Mammary epithelial cell (primary cell): ENCODE measurements at regions of chr19 and their contacts with region 1.

Region 1: GRCh38 chr19:7535035-7535992 is at the start of gene PNPLA6:
- DNase-seq: peak; percentile 88
- H3K4me3 ChIP-seq: peak within 1 kb of the TSS; percentile 86 to 99 (median 99)
- H3K27ac ChIP-seq: peak within 1 kb of the TSS; percentile 27
- H3K4me1 ChIP-seq: peaks cover 8% of the 10 kb centered on the region
- H3K27me3 ChIP-seq: no peaks in the 10 kb centered on the region
- CTCF ChIP-seq: no peak
- total RNA-seq, gene PNPLA6: 100 to 118 TPM

Region 2: GRCh38 chr19:7349961-7350711 is 185.2 kb before region 1 on chr19:
- CTCF ChIA-PET with region 1: no interaction called
- dilution Hi-C with region 1: no loop called
- in situ Hi-C with region 1: no loop called
- intact Hi-C with region 1: loop called (anchors 1 kb)
- DNase-seq: no peak
- H3K4me3 ChIP-seq: no peak overlapping the region
- H3K27ac ChIP-seq: no peak overlapping the region
- H3K4me1 ChIP-seq: no peaks in the 10 kb centered on the region
- H3K27me3 ChIP-seq: no peaks in the 10 kb centered on the region
- CTCF ChIP-seq: no peak

Region 3: DNA sequence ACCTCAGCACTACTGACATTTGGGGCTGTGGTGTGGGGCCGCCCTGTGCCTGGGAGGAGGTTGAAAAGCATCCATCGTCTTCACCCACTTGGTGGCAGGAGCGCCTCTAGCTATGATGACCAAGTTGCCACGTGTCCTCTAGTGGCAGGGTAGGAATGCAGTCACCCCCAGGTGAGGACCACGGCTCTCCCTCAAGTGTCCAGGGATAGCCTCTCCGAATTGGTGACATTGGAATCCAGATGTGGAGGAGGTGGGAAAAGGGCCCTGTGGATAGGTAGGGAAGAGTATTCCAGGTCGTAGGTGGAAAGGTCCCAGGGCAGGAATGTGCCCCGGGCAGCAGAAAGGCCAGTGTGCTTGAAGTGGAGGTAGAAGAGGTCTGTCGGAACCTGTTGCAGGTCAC is 149.0 kb before region 1 on chr19:
- CTCF ChIA-PET with region 1: no interaction called
- dilution Hi-C with region 1: no loop called
- in situ Hi-C with region 1: loop called in 1 of 2 experiments (anchors 25 kb)
- intact Hi-C with region 1: loop called (anchors 1 kb)
- DNase-seq: no peak
- H3K4me3 ChIP-seq: no peak overlapping the region
- H3K27ac ChIP-seq: no peak overlapping the region
- H3K4me1 ChIP-seq: peaks cover 7% of the 10 kb centered on the region
- H3K27me3 ChIP-seq: no peaks in the 10 kb centered on the region
- CTCF ChIP-seq: peak in 1 of 2 donors; percentile 26

Region 4: DNA sequence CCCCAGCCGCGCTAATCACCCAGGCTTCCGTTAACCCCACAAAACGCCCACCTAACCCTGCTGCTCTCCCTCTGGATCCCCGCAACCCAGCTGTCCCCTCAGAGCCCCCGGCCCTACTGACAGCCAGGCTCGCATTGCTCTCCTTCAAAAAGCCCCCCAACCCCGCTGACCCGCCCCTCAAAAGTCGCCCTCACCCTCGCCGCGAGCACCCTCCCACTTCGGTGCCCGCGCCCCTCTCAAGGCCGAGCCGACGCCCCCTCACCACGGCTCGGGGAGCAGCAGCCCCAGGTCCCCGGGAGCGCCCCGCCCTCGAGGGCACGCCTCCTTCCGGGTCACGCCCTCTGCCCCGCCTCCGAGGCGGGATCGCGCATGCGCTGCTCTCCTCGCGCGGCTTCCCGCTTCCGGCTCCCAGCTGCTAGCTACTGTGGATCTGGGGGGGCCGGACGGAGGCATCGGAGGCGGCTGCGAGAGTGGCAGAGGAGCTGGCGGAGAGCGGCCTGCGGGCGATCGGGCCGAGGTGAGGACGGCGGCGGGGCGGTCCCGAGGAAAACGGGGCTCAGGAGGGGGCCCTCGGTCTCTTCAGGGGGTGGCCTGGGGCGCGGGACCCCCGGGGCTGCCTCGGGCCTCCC is 140.5 kb before region 1 on chr19:
- CTCF ChIA-PET with region 1: no interaction called
- dilution Hi-C with region 1: no loop called
- in situ Hi-C with region 1: loop called in 1 of 2 experiments (anchors 25 kb)
- intact Hi-C with region 1: loop called (anchors 1 kb)
- DNase-seq: peak; percentile 89
- H3K4me3 ChIP-seq: peak overlapping the region; percentile 91 to 94 (median 93)
- H3K27ac ChIP-seq: peak overlapping the region; percentile 53
- H3K4me1 ChIP-seq: peaks cover 5% of the 10 kb centered on the region
- H3K27me3 ChIP-seq: no peaks in the 10 kb centered on the region
- CTCF ChIP-seq: peak in 1 of 2 donors; percentile 10

Region 5: DNA sequence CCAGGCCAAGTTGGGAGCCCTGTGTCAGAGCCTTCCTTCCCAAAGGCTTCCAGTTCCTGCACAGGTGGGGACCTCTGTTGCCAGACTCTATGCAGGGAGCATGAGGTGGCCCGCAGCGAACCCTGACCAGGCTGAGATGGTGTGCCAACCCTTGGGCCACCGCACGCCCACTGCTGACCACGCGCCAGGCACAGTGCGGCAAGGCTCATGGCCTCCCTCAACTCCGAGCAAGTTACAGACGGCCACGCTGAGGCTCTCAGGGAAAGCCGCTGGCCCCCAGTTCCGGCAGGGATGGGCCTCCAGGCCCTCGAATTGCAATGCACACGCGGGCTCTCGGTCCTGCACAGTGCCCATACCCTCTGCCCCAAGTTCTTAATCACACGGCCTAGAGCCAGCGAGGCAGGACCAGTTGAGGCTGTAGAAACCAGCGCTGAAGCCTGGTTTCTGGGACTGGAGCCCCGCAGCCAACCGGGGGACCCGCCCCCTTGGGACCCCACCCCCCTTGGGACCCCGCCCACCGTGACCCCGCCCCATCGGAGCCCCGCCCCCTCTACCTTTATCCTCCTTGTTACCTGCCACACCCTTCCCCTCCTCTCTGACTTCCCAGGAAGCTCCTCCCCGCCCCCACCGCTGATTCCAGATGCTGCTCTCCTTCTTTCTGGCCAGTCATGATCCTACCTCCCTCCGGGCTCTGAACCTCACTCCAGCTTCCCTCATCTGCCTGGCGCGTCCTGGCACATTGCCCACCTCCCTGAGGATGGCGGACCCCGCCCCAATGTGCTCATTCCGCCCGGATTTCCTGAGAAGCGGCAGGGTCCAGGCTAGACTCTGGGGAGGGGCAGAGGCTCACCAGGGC is 52.5 kb before region 1 on chr19:
- CTCF ChIA-PET with region 1: no interaction called
- dilution Hi-C with region 1: no loop called
- in situ Hi-C with region 1: no loop called
- intact Hi-C with region 1: loop called (anchors 2 kb)
- DNase-seq: peak; percentile 28
- H3K4me3 ChIP-seq: peak overlapping the region in 1 of 3 experiments; percentile 9
- H3K27ac ChIP-seq: no peak overlapping the region
- H3K4me1 ChIP-seq: peaks cover 30% of the 10 kb centered on the region
- H3K27me3 ChIP-seq: no peaks in the 10 kb centered on the region
- CTCF ChIP-seq: no peak

Region 6: GRCh38 chr19:7522072-7522922 is 13.0 kb before region 1 on chr19 and contains the start of gene MCOLN1:
- CTCF ChIA-PET with region 1: no interaction called
- dilution Hi-C with region 1: no loop called
- in situ Hi-C with region 1: no loop called
- intact Hi-C with region 1: loop called (anchors 1 kb)
- DNase-seq: peak; percentile 92
- H3K4me3 ChIP-seq: peak within 1 kb of the TSS; percentile 61 to 78 (median 76)
- H3K27ac ChIP-seq: peak within 1 kb of the TSS; percentile 18
- H3K4me1 ChIP-seq: peaks cover 14% of the 10 kb centered on the region
- H3K27me3 ChIP-seq: no peaks in the 10 kb centered on the region
- CTCF ChIP-seq: no peak
- total RNA-seq, gene MCOLN1: 10.2 to 15.7 TPM

Region 7: GRCh38 chr19:7605490-7606222 is 70.3 kb after region 1 on chr19:
- CTCF ChIA-PET with region 1: no interaction called
- dilution Hi-C with region 1: no loop called
- in situ Hi-C with region 1: no loop called
- intact Hi-C with region 1: no loop called
- DNase-seq: peak; percentile 16
- H3K4me3 ChIP-seq: no peak overlapping the region
- H3K27ac ChIP-seq: no peak overlapping the region
- H3K4me1 ChIP-seq: no peaks in the 10 kb centered on the region
- H3K27me3 ChIP-seq: no peaks in the 10 kb centered on the region
- CTCF ChIP-seq: no peak